Mammary epithelial cell (primary cell): ENCODE measurements at regions of chr16 and their contacts with region 1.

Region 1: DNA sequence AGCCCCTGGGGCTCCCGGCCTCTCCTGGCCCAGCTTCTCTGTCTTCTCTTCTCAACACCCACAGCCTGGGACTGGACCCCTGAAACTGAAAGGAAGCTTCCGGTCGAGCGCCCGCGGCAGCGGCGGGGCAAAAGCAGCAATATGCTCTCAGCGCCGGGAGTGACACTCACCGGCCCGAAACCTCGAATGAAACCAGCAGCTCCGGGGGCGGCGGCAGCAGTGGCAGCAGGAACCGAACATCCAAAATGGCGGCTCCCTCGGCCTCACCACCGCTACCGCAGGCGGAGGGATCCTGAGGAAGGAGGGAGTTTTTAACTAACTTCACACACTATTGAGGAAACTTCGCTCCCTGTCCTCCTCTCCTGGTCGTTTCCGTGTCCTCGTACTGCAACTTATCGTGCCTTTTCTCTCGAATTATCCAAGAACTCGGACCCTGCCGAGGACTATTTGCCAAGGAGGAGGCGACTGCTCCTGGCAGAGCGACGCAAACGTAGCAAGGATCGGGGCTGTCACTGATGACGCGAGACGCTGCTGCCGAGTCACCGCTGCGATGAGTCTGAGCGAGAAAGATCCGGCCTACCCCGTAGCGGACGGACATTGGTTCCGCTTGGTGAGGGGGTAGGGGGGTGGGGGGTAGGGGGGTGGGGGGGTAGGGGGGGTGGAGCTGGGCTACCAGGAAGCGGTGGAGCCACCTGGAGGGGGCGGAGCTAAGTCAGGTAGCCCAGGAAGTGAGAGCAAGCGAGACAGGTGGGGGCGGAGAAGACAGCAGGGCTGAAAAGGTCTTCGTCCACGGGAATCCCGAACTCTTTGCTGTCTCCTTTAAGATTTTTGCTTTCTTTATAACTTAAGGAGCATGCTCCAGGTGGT is at the start of gene AP1G1:
- DNase-seq: peak; percentile 98
- H3K4me3 ChIP-seq: peak within 1 kb of the TSS; percentile 85 to 99 (median 90)
- H3K27ac ChIP-seq: peak within 1 kb of the TSS; percentile 100
- H3K4me1 ChIP-seq: peaks cover 10% of the 10 kb centered on the region
- H3K27me3 ChIP-seq: no peaks in the 10 kb centered on the region
- CTCF ChIP-seq: no peak
- total RNA-seq, gene AP1G1: 80.1 to 95.4 TPM

Region 2: GRCh38 chr16:71658771-71659170 is 150.1 kb before region 1 on chr16:
- CTCF ChIA-PET with region 1: no interaction called
- dilution Hi-C with region 1: no loop called
- in situ Hi-C with region 1: no loop called
- intact Hi-C with region 1: no loop called
- DNase-seq: no peak
- H3K4me3 ChIP-seq: no peak overlapping the region
- H3K27ac ChIP-seq: no peak overlapping the region
- H3K4me1 ChIP-seq: no peaks in the 10 kb centered on the region
- H3K27me3 ChIP-seq: no peaks in the 10 kb centered on the region
- CTCF ChIP-seq: no peak

Region 3: DNA sequence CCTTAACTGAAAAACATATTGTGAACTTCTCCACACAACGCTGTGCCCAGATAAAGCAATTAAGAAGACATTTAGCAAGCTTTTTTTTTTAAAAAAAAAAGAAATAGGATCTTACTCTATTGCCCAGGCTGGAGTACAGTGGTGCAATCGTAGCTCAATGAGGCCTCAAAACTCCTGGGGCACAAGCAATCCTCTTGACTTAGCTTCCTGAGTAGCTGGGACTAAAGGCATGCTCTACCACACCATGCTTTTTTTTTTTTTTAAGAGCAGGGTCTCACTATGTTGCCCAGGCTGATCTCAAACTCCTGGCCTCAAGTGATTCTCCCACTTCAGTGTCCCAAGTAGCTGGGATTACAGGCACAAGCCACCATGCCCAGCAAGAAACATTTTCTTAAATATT is 20.2 kb before region 1 on chr16:
- CTCF ChIA-PET with region 1: no interaction called
- dilution Hi-C with region 1: no loop called
- in situ Hi-C with region 1: no loop called
- intact Hi-C with region 1: loop called (anchors 2 kb)
- DNase-seq: no peak
- H3K4me3 ChIP-seq: no peak overlapping the region
- H3K27ac ChIP-seq: no peak overlapping the region
- H3K4me1 ChIP-seq: no peaks in the 10 kb centered on the region
- H3K27me3 ChIP-seq: no peaks in the 10 kb centered on the region
- CTCF ChIP-seq: no peak

Region 4: DNA sequence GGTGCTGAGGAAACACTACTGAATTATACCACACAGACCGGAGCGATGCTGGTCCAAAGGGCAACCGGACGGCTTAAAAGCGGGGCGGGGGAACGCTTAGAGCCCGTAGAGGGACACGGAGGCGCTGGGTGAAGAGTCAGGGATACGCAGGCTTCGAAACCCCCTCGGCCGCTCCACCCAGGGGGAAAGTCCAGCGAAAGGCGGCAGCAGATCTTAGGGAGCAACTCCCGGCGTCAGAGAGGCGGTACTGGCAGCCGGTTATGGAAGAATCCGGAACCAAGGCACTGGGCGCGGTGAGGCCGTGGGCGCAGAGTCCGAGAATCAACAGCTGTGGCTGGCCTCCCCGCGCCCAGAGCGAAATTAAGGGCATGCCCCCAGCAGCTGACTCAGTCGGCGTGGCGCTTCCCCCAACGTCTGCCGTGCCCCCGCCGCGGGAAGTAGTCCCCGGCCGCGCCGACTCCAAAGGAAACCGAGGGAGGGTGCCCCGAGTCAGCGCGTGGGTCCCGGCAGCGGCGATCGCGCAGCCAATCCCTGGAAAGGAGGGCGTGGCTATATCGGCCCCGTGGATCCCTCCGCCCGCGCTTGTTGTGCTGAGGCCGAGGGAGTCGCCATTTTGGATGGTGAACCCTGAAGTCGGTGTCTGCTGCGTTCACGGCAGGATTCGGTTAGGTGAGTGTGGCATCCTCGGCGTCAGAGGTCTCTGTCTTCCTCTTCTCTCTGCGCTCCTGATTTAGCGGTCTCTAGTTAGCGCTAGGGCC is 86.3 kb after region 1 on chr16 and contains the start of gene IST1:
- CTCF ChIA-PET with region 1: no interaction called
- dilution Hi-C with region 1: no loop called
- in situ Hi-C with region 1: no loop called
- intact Hi-C with region 1: loop called (anchors 1 kb)
- DNase-seq: peak; percentile 98
- H3K4me3 ChIP-seq: peak within 1 kb of the TSS; percentile 85 to 96 (median 87)
- H3K27ac ChIP-seq: peak within 1 kb of the TSS; percentile 87
- H3K4me1 ChIP-seq: peaks cover 15% of the 10 kb centered on the region
- H3K27me3 ChIP-seq: no peaks in the 10 kb centered on the region
- CTCF ChIP-seq: no peak
- total RNA-seq, gene IST1: 123 to 203 TPM